ENCODE measurements at regions of chr3 and their contacts with region 1.

Region 1: GRCh38 chr3:151227807-151228665 is 25.0 kb upstream of the GPR171 start:
- DNase-seq: peak; percentile 58
- ATAC-seq: peak; percentile 86
- H3K4me3 Mint-ChIP-seq: no peak overlapping the region
- H3K27ac Mint-ChIP-seq: peak overlapping the region; percentile 65
- H3K4me1 Mint-ChIP-seq: peaks cover 44% of the 10 kb centered on the region
- H3K27me3 Mint-ChIP-seq: no peaks in the 10 kb centered on the region
- CTCF ChIP-seq: peak; percentile 94

Region 2: GRCh38 chr3:151156618-151157216 is 71.3 kb before region 1 on chr3:
- CTCF ChIA-PET with region 1: interaction called, 10 read pairs
- POLR2A ChIA-PET with region 1: no interaction called
- intact Hi-C with region 1: no loop called
- DNase-seq: no peak
- ATAC-seq: peak; percentile 87
- H3K4me3 Mint-ChIP-seq: no peak overlapping the region
- H3K27ac Mint-ChIP-seq: no peak overlapping the region
- H3K4me1 Mint-ChIP-seq: no peaks in the 10 kb centered on the region
- H3K27me3 Mint-ChIP-seq: no peaks in the 10 kb centered on the region
- CTCF ChIP-seq: no peak

Region 3: DNA sequence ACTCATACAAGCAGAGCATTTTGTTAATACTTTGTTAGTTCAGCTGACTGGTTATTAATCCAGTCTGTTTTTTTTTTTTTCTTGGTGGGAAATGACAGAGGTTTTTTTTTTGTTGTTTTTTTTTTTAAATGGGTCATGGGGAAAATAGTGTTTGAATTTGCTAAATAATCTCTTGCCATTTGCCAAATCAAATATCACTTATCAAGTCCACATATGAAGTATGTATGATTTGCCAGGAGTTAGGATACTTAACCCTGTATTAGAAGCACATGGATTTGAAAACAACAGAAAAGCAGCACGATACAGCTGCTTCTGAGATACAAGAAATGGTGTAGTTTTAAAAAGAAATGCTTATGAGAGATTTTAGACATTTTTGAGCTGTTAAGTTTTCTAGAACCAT is 28.7 kb after region 1 on chr3:
- CTCF ChIA-PET with region 1: interaction called, 10 read pairs
- POLR2A ChIA-PET with region 1: no interaction called
- intact Hi-C with region 1: loop called (anchors 2 kb)
- DNase-seq: no peak
- ATAC-seq: no peak
- H3K4me3 Mint-ChIP-seq: no peak overlapping the region
- H3K27ac Mint-ChIP-seq: no peak overlapping the region
- H3K4me1 Mint-ChIP-seq: no peaks in the 10 kb centered on the region
- H3K27me3 Mint-ChIP-seq: no peaks in the 10 kb centered on the region
- CTCF ChIP-seq: no peak

Region 4: GRCh38 chr3:151282921-151283320 is 54.9 kb after region 1 on chr3:
- CTCF ChIA-PET with region 1: interaction called, 237 read pairs
- POLR2A ChIA-PET with region 1: interaction called, 91 read pairs
- intact Hi-C with region 1: loop called (anchors 1 kb)
- DNase-seq: no peak
- ATAC-seq: peak; percentile 38
- H3K4me3 Mint-ChIP-seq: no peak overlapping the region
- H3K27ac Mint-ChIP-seq: no peak overlapping the region
- H3K4me1 Mint-ChIP-seq: peaks cover 30% of the 10 kb centered on the region
- H3K27me3 Mint-ChIP-seq: no peaks in the 10 kb centered on the region
- CTCF ChIP-seq: peak; percentile 78

Region 5: GRCh38 chr3:151439652-151440129 is 211.7 kb after region 1 on chr3:
- CTCF ChIA-PET with region 1: interaction called, 3 read pairs
- POLR2A ChIA-PET with region 1: no interaction called
- intact Hi-C with region 1: loop called (anchors 10 kb)
- DNase-seq: no peak
- ATAC-seq: peak; percentile 81
- H3K4me3 Mint-ChIP-seq: no peak overlapping the region
- H3K27ac Mint-ChIP-seq: no peak overlapping the region
- H3K4me1 Mint-ChIP-seq: peaks cover 3% of the 10 kb centered on the region
- H3K27me3 Mint-ChIP-seq: no peaks in the 10 kb centered on the region
- CTCF ChIP-seq: no peak

Region 6: DNA sequence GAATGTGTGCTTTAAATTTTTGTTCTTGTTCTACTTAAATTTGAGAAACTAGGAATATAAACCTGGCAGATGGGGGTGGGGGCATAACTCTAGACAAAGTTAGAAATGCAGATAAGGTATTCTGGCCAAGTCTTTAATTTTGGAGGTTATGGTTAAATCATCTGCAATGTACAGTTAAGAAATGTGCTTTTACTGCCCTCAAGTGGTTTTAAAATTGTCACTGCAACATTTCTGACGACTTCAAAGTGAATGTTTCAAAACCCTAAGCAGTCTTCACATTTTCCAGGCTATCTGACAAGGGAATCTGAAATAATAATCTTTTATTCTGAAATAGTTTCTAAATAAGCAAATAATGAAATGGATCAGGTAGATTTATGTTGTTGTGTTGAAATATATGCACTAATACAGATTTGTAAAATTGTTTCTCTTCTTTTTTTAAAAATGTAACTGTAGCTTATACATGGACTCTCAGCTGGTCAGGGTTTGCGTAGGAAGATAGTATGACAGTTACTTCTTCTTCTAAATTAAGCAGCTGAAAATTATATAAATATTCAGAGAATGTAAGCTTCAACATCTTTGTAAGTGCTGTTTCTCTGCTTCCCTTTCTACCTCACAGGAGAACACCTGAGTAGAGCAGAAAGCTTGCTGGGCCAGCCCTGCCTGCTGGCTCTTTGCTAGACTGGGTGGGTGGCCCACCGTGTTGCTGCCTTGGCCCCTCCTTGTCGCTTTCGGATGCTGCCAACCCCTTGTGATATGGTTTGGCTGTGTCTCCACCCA is 690.4 kb after region 1 on chr3:
- CTCF ChIA-PET with region 1: interaction called, 3 read pairs
- POLR2A ChIA-PET with region 1: no interaction called
- intact Hi-C with region 1: loop called (anchors 5 kb)
- DNase-seq: no peak
- ATAC-seq: no peak
- H3K4me3 Mint-ChIP-seq: no peak overlapping the region
- H3K27ac Mint-ChIP-seq: no peak overlapping the region
- H3K4me1 Mint-ChIP-seq: no peaks in the 10 kb centered on the region
- H3K27me3 Mint-ChIP-seq: no peaks in the 10 kb centered on the region
- CTCF ChIP-seq: peak; percentile 18

Measured in activated B cell treated with CpG ODN at 0.5 μM for 24 hours (primary cell).